ENCODE measurements at regions of chr1 and their contacts with region 1.

Region 1: GRCh38 chr1:115771847-115772457 is 3.4 kb upstream of the CASQ2 start:
- DNase-seq: peak; percentile 57 to 83
- H3K4me3 ChIP-seq: peak overlapping the region; percentile 37 to 44
- H3K27ac ChIP-seq: peak overlapping the region; percentile 83 to 88
- H3K4me1 ChIP-seq: peaks cover 0 to 28% (median 9%) of the 10 kb centered on the region in 4 donors
- H3K27me3 ChIP-seq: no peaks in the 10 kb centered on the region
- CTCF ChIP-seq: peak; percentile 78 to 82

Region 2: DNA sequence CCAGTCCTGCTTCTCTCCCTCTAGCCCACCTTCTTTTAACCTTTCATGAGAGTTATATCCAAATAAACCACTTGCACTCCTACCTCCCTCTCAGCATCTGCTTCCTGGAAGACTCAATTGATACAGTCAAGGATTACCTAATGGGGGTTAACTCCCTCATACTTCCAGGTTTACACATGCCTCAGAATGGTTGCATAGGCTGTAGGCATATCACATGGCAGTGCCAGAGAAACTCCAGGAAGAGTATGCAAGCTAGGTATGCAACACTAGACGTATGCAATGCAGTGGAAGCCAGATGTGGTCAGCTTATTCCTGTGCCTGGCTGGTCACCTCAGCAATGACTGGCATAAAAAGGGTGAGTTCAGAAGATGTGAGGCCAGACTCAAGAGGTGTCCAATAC is 162.9 kb before region 1 on chr1:
- intact Hi-C with region 1: loop called (anchors 5 kb)
- DNase-seq: no peak
- H3K4me3 ChIP-seq: no peak overlapping the region
- H3K27ac ChIP-seq: no peak overlapping the region
- H3K4me1 ChIP-seq: no peaks in the 10 kb centered on the region
- H3K27me3 ChIP-seq: no peaks in the 10 kb centered on the region
- CTCF ChIP-seq: no peak

Region 3: DNA sequence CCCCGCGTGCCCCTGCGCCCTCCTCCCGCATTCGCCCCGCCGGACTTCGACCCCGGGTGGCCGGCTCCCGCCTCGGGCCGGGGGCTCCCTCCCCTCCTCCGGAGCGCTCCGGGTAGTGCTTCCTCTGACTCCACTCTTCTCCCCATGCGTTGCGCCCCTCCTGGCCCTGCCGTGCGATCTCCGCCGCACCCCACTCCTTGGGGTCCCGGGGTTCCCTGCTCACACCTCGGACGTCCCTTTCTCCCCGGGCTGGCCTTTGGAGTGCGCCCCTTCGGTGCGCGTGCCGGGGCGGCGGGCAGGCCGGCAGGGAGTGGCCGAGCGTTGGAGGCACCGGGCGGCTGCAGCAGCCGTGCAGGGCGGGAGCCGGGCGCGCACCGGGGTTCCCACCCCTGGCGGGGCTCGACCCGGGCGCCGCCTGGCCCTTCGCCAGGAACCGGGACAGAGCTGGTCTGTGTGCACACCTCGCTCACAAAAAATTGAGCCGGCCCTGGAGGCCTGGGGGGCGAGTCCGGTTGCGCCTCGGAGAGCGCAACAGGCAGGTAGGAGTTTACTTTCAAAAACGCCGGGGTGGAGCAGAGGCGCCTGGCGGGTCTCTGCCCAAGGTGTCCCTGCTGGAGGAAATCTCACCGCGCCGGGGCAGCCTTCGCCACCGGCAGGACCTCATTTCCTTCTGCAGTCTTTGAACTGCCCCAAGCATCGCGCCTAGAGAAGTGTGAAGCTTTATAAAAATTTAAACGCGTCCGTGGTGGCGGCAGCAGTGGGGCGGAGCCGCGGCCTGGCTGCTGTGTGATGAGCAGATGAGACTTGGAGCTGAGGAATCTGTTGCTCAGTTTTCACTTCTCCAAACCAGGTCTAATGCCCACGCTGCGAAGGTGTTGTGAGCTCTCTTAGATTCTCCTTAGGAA is 129.5 kb before region 1 on chr1:
- intact Hi-C with region 1: loop called (anchors 10 kb)
- DNase-seq: peak; percentile 26 to 68
- H3K4me3 ChIP-seq: peak overlapping the region; percentile 73 to 84
- H3K27ac ChIP-seq: peak overlapping the region; percentile 62 to 68
- H3K4me1 ChIP-seq: peaks cover 0 to 22% (median 3%) of the 10 kb centered on the region in 4 donors
- H3K27me3 ChIP-seq: no peaks in the 10 kb centered on the region
- CTCF ChIP-seq: peak in 1 of 2 experiments; percentile 5

Region 4: GRCh38 chr1:115717541-115717940 is 54.4 kb before region 1 on chr1:
- intact Hi-C with region 1: loop called (anchors 2 kb)
- DNase-seq: peak in 1 of 2 donors; percentile 55
- H3K4me3 ChIP-seq: no peak overlapping the region
- H3K27ac ChIP-seq: no peak overlapping the region
- H3K4me1 ChIP-seq: peaks cover 0 to 3% (median 0%) of the 10 kb centered on the region in 4 donors
- H3K27me3 ChIP-seq: no peaks in the 10 kb centered on the region
- CTCF ChIP-seq: peak; percentile 63 to 69